Caco-2 (cell line): ENCODE measurements at regions of chr20 and their contacts with region 1.

Region 1: GRCh38 chr20:9359561-9360308 is 154.7 kb upstream of the LAMP5 start:
- DNase-seq: peak; percentile 53 to 62
- H3K4me3 ChIP-seq: no peak overlapping the region
- H3K4me3 Mint-ChIP-seq: no peak overlapping the region
- H3K27ac Mint-ChIP-seq: no peak overlapping the region
- H3K4me1 ChIP-seq: no peaks in the 10 kb centered on the region
- H3K4me1 Mint-ChIP-seq: no peaks in the 10 kb centered on the region
- H3K27me3 ChIP-seq: no peaks in the 10 kb centered on the region
- H3K27me3 Mint-ChIP-seq: no peaks in the 10 kb centered on the region
- CTCF ChIP-seq: peak; percentile 50 to 66

Region 2: DNA sequence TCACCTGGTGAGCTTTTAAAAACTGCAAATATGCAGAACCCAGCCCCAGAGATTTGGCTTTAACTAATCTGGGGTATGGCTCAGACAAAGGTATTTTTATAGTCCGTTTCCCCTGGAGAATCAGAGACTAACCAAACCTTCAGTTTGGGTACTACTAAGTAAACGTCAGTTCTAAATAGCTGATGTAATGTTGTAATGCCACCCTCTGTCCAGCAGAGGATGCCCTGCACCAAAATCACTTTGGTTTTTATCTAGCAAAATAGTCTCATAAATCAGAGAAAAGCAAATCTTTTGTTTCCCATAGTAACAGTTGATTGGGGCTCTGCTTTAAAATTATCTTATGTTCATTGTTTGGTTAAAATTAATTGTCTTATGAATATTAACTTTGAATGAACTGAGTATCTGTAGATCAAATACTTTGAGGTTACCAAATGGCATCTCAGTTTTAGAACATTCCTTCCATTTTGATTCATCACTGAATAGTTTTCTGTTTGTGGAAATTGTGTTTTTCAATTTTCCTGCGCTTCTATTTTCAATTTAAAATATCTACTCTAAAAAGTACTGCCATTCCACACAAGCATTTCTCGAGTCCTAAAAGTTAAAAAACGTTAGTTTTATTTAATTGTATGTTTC is 569.2 kb before region 1 on chr20:
- CTCF ChIA-PET with region 1: no interaction called
- POLR2A ChIA-PET with region 1: no interaction called
- intact Hi-C with region 1: loop called (anchors 1 kb)
- DNase-seq: peak in 1 of 2 experiments; percentile 43
- H3K4me3 ChIP-seq: no peak overlapping the region
- H3K4me3 Mint-ChIP-seq: no peak overlapping the region
- H3K27ac Mint-ChIP-seq: no peak overlapping the region
- H3K4me1 ChIP-seq: peaks cover 26% of the 10 kb centered on the region
- H3K4me1 Mint-ChIP-seq: peaks cover 1% of the 10 kb centered on the region
- H3K27me3 ChIP-seq: no peaks in the 10 kb centered on the region
- H3K27me3 Mint-ChIP-seq: no peaks in the 10 kb centered on the region
- CTCF ChIP-seq: peak; percentile 92 to 93

Region 3: DNA sequence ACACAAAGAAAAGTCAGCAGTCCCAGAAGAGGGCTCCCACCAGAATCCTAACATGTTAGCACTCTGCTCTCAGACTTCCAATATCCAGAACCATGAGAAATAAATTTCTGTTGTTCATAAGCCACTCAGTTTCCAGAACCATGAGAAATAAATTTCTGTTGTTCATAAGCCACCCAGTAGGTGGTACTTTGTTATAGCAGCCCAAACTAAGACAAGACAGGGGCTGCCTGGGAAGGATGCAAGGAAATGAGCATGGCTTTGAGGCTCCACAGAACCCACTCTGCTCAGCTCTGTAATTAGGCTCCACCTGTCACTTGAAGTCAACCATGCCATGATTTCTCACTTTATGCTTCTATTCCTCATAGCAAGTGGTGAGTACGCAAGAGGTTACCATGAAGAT is 383.4 kb before region 1 on chr20:
- CTCF ChIA-PET with region 1: no interaction called
- POLR2A ChIA-PET with region 1: no interaction called
- intact Hi-C with region 1: loop called (anchors 5 kb)
- DNase-seq: no peak
- H3K4me3 ChIP-seq: no peak overlapping the region
- H3K4me3 Mint-ChIP-seq: no peak overlapping the region
- H3K27ac Mint-ChIP-seq: no peak overlapping the region
- H3K4me1 ChIP-seq: no peaks in the 10 kb centered on the region
- H3K4me1 Mint-ChIP-seq: no peaks in the 10 kb centered on the region
- H3K27me3 ChIP-seq: no peaks in the 10 kb centered on the region
- H3K27me3 Mint-ChIP-seq: peaks cover 7% of the 10 kb centered on the region
- CTCF ChIP-seq: no peak

Region 4: GRCh38 chr20:9119776-9120175 is 240.0 kb before region 1 on chr20:
- CTCF ChIA-PET with region 1: no interaction called
- POLR2A ChIA-PET with region 1: no interaction called
- intact Hi-C with region 1: loop called (anchors 10 kb)
- DNase-seq: no peak
- H3K4me3 ChIP-seq: no peak overlapping the region
- H3K4me3 Mint-ChIP-seq: no peak overlapping the region
- H3K27ac Mint-ChIP-seq: no peak overlapping the region
- H3K4me1 ChIP-seq: no peaks in the 10 kb centered on the region
- H3K4me1 Mint-ChIP-seq: no peaks in the 10 kb centered on the region
- H3K27me3 ChIP-seq: no peaks in the 10 kb centered on the region
- H3K27me3 Mint-ChIP-seq: peaks cover 2% of the 10 kb centered on the region
- CTCF ChIP-seq: no peak

Region 5: DNA sequence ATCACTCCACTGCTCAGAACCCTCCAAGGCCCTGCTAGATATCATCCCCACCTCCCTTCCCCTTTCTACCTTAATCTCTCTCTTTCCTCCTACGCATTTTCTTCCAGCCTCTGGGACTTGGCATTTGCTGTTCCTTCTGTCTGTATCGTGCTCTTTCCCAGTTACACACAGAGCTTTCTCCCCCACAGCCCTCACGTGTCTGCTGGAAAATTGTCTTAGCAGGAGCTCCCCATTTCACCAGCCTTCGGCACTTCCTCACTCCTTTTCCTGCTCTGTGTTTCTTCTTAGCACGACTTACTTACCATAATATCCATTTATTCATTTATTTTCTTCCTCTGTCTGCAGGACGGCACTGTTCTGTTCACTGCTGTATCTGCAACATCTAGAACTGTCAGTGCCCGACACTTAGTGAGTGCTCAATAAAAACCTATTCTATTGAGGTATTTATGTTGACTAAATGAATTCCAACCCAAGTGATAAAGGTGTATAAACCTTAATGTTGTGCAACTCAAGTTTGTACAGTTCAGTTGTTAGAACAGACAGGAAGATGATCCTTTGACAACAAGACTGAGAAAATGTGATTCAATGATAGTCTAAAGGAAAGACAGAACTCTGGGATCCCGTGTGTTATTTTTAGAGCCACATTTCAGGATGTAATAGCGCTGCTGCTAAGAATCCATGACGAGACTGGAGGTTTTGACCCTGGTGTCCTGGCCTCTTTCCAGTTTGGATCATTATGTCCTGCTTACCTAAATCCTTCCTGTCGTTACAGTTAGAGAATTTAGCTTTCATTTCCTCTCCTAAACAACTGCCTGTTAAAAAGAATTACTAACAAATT is 15.4 kb before region 1 on chr20:
- CTCF ChIA-PET with region 1: no interaction called
- POLR2A ChIA-PET with region 1: no interaction called
- intact Hi-C with region 1: loop called (anchors 1 kb)
- DNase-seq: no peak
- H3K4me3 ChIP-seq: no peak overlapping the region
- H3K4me3 Mint-ChIP-seq: no peak overlapping the region
- H3K27ac Mint-ChIP-seq: no peak overlapping the region
- H3K4me1 ChIP-seq: peaks cover 11% of the 10 kb centered on the region
- H3K4me1 Mint-ChIP-seq: no peaks in the 10 kb centered on the region
- H3K27me3 ChIP-seq: no peaks in the 10 kb centered on the region
- H3K27me3 Mint-ChIP-seq: peaks cover 5% of the 10 kb centered on the region
- CTCF ChIP-seq: no peak